Activated T-helper 1 cell treated with anti-CD3 and anti-CD28 coated beads, Interleukin-12 subunit alpha, Interleukin-12 subunit beta, Interleukin-2, Interleukin-4 antibody, amounts not matched to agents 30 ng/mL and 10 ng/mL and 1 ng/mL, durations not matched to agents 14 hours and 24 hours and 36 hours (primary cell): ENCODE measurements at regions of chr9 and their contacts with region 1.

Region 1: DNA sequence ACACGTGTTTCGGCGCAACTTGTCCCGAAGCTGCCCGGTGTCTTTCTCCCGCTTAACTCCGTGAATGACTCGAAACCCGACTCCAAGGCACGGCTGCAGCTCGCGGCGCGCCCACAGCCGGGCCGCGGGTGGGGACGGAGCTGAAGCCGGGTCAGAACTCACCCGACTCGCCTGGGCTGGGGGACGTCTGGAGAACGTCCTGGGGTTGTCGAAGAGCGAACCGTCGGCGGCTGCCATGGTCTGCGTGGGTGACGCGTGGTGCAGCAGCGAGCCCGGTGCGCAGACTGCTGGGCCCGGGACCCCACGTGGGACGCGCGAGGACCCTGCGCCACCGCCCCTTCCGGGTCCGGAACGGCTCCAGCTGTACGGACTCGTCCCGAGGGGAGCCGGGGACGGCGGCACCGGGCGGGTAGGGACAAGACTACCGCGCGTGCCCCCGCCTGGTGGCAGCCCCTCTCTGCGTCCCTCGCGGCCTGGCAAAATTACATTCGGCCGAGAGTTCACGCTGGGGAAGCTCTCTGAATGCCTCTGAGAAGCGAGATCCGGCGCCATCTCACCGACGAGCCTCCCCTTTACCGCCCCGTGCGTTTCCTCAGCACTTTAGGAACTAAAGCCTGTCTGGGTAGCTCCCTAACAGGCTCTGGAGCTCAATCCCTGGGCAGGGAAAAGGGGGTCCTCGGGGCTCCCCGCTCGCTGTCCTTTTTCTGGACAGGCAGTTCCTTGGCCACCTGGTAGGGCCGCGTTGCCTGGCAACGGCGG is at the start of gene DDX31:
- DNase-seq: peak; percentile 84
- H3K4me3 Mint-ChIP-seq: peak within 1 kb of the TSS; percentile 96
- H3K27ac Mint-ChIP-seq: peak within 1 kb of the TSS; percentile 90
- H3K4me1 Mint-ChIP-seq: peaks cover 38% of the 10 kb centered on the region
- H3K27me3 Mint-ChIP-seq: no peaks in the 10 kb centered on the region
- total RNA-seq, gene DDX31: 32.1 and 34.1 TPM in 2 replicates

Region 2: GRCh38 chr9:132637351-132637750 is 32.5 kb before region 1 on chr9:
- intact Hi-C with region 1: no loop called
- DNase-seq: no peak
- H3K4me3 Mint-ChIP-seq: no peak overlapping the region
- H3K27ac Mint-ChIP-seq: no peak overlapping the region
- H3K4me1 Mint-ChIP-seq: peaks cover 5% of the 10 kb centered on the region
- H3K27me3 Mint-ChIP-seq: no peaks in the 10 kb centered on the region

Region 3: DNA sequence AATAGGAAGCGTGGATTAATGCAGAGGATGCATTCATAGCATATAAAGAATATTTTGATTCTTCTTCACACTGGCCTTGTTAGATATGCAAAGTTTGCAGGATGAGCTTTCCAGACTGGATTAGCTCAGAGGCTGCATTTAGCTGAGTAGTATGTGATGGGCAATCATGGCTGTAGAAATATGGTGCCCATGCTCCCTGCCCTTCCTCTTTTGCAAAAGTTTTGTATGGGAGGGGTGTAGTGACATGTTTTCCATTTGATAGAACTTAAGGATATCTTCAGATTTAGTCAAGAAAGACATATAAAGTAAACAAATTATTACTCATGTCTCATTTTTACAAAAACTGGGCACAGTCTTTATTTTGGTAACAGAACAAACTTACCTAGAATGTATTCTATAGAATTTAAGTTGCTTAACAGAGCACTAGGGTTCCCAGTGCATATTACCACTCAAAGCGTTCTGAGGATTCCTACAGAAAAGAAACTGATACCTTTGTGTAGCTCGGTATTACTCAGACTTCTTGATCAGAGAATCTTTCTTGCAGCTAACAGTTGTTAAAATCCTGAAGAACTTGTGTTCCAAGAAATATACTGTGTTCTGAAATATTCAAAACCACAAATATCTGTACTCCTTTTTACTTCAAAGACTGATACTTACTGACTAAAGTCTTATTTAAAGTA is 10.2 kb after region 1 on chr9:
- intact Hi-C with region 1: loop called (anchors 1 kb)
- DNase-seq: no peak
- H3K4me3 Mint-ChIP-seq: no peak overlapping the region
- H3K27ac Mint-ChIP-seq: peak overlapping the region; percentile 90
- H3K4me1 Mint-ChIP-seq: peaks cover 51% of the 10 kb centered on the region
- H3K27me3 Mint-ChIP-seq: no peaks in the 10 kb centered on the region

Region 4: DNA sequence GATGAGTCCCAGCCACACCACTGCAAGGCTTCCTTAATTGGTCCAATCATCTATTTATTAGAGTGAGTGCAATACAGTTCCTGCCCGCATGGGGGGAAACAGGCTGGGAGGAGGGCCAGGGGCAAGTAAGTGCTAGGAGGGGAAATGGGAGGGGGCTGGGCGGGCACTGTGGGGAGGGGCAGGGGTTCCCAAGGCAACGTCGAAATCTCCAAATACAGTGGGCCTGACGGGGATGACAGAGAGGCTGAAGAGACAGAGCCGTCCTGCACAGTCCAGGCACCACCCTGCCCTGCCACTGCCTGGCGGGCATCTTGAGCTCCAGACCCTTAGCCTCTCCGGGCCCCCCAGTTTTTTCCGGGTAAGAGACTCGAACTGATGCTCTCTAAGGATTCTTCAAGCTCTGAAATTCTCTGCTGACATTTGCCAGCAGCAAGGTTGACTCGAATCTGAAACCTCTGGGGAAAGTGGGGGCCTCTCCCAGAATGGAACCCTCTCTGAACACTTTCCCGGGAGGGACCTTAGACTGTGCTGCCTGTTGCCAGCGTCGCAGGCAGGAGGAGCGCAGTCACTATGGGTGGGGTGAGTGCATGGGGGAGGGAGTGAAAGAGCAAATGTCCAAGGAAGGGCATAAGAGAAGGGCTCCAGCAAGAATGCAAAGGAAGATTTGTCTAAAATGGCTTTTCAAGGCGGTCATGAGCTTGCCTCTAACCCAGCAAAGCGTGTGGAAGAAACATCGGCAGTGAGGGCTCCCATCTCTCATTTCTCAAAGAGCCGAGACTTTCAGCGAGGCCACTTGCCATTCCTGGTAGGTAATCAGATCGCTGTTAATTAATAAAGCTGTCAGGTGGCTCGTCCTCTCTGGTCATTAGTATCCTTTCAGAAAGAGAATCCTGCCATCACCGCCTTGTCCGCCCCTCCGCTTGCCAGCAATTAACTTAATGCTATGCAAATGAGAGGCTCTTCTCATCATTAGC is 99.3 kb after region 1 on chr9:
- intact Hi-C with region 1: loop called (anchors 2 kb)
- DNase-seq: peak; percentile 35
- H3K4me3 Mint-ChIP-seq: peak overlapping the region; percentile 93
- H3K27ac Mint-ChIP-seq: peak overlapping the region; percentile 97
- H3K4me1 Mint-ChIP-seq: peaks cover 18% of the 10 kb centered on the region
- H3K27me3 Mint-ChIP-seq: peaks cover 13% of the 10 kb centered on the region

Region 5: DNA sequence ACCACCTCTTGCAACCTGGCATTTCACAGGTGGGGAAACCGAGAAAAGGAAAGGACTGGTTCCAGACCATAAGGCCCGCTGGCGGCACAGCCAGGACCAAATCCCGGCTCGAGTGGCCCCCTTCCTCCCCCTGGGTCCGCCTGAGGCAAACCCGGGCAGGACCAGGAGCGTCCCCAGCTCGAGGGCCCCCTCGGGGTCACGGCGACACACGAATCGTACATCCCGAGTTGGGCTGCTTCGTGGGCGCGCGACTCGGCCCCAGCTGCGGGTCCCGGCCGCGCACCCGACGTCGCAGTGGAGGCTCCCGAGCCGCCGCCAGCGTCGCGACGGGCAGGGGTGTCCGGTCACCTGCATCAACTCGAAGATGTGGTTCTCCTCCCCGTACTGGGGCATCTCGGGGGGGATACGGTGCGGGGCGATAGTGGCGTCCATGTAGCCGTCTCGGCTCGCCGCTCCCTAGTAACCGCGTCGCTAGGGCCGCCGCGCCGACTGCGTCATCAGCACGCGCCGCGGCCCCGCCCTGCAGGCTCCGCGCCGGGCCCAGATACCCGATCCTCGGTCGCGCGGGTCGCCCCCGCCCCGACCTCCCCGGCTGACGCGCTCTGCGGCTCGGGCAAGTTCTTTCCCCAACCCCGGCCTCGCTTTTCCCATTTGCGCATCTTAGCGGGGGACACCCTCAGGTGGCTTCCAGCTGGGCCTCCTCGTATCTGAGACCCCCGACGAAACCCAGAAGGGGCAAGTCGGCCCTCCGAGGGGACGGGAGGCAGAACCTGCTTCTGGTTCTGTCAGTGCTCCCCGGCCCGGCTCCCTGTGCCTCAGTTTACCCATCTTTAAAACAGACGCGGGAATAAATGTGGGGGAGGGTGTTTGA is 208.2 kb after region 1 on chr9 and contains the start of gene AK8:
- intact Hi-C with region 1: loop called (anchors 1 kb)
- DNase-seq: peak; percentile 75
- H3K4me3 Mint-ChIP-seq: peak within 1 kb of the TSS; percentile 84
- H3K27ac Mint-ChIP-seq: peak within 1 kb of the TSS; percentile 68
- H3K4me1 Mint-ChIP-seq: peaks cover 27% of the 10 kb centered on the region
- H3K27me3 Mint-ChIP-seq: peaks cover 9% of the 10 kb centered on the region
- total RNA-seq, gene AK8: not detected in 2 replicates